AG04449 (cell line): ENCODE measurements at regions of chr14 and their contacts with region 1.

Region 1: DNA sequence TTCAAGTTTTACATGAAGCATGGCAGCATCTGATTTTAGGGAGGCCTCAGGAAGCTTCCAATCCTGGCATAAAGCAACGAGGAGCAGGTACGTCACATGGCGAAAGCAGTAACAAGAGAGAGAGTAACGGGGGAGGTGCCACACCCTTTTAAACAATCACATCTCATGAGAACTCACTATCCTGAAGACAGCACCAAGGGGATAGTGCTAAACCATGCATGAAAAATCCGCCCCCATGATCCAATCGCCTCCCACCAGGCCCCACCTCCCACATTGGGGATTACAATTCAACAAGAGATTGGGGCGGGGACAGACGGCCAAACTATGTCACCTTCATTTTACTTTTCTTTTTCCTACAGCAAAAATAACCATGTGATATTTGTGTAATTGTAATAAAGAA is 7.2 kb upstream of the MAP3K9 start:
- DNase-seq: no peak
- H3K4me3 ChIP-seq: no peak overlapping the region
- CTCF ChIP-seq: no peak

Region 2: DNA sequence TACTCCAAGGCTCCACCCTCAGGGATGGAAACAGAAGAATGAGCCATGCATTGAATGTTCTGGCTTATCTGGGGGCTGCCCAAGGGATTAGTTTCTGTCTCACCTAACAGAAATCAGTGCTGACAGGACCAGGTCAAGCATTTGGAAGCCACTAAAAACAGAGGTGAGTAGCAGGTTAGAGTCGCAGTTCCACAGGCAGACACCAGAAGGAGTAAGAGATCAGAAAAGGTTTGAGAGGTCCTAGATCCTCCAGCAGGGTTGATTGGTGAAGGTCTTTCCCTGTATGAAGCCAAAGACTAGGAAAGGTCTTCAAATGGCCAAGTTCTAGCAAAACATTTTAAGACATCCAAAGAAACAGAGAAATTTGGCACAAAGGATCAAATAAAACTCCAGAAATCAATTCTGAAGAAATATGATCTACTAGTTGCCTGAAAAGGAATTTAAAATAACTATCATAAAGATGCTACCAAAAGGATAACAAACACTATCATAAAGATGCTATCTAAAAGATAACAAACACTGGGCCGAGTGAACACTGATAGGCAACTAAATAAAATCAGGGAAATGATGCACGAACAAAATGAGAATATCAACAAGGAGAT is 194.3 kb before region 1 on chr14:
- CTCF ChIA-PET with region 1: interaction called, 13 read pairs
- POLR2A ChIA-PET with region 1: no interaction called
- DNase-seq: no peak
- H3K4me3 ChIP-seq: no peak overlapping the region
- CTCF ChIP-seq: peak; percentile 59

Region 3: DNA sequence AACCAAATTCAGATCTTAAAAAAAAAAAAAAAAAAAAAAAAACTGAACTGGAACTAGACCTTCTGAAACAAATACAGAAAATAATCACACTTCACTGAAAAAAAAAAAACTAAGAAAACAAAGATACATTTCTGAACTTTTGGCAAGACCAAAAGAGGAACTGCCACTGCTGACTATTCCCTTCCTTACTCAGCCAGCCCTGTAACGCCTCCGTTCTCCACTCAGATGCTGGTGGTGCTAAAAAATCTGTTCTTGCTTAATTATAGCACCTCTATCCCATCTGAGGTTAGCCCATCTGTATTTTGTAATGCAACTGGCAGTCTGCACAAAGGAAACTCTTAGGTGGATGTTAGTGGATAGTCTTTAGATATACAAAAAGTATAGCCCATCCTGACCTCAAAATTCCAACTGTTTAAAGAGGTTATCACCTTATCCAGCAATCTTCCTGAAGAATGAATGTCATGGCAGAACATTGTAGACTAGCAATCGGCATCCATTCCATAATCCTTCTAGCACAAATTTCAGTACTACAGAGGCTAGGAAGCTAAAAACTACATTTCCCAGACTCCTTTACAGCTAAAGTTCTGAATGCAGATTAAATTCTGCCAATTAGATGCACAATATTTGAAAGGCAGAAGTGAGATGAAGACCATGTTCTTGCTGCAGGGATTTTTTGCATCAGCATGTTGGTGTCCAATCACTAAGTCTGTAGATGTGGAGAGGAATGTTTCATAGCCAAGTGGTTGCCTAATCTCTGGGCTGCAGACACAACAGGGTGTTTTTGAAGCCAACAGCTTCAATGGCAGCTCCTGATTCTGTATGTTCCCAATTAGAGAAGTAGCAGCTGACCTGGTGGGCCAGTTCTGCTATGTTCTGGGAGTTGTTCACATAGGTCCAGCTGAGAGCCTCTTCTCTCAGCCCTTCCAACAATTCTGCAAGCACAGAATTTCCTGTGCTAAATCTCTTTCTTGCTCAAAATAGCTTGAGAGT is 12.9 kb before region 1 on chr14:
- CTCF ChIA-PET with region 1: interaction called, 25 read pairs
- POLR2A ChIA-PET with region 1: no interaction called
- DNase-seq: no peak
- H3K4me3 ChIP-seq: no peak overlapping the region
- CTCF ChIP-seq: no peak

Region 4: GRCh38 chr14:70827396-70828151 is 11.0 kb after region 1 on chr14:
- CTCF ChIA-PET with region 1: interaction called, 87 read pairs
- POLR2A ChIA-PET with region 1: no interaction called
- DNase-seq: no peak
- H3K4me3 ChIP-seq: no peak overlapping the region
- CTCF ChIP-seq: no peak

Region 5: GRCh38 chr14:70856851-70857495 is 40.4 kb after region 1 on chr14:
- CTCF ChIA-PET with region 1: interaction called, 12 read pairs
- POLR2A ChIA-PET with region 1: no interaction called
- DNase-seq: peak; percentile 92
- H3K4me3 ChIP-seq: no peak overlapping the region
- CTCF ChIP-seq: no peak

Region 6: GRCh38 chr14:70897464-70897863 is 80.9 kb after region 1 on chr14:
- CTCF ChIA-PET with region 1: interaction called, 13 read pairs
- POLR2A ChIA-PET with region 1: interaction called, 3 read pairs
- DNase-seq: peak; percentile 67
- H3K4me3 ChIP-seq: no peak overlapping the region
- CTCF ChIP-seq: no peak

Region 7: DNA sequence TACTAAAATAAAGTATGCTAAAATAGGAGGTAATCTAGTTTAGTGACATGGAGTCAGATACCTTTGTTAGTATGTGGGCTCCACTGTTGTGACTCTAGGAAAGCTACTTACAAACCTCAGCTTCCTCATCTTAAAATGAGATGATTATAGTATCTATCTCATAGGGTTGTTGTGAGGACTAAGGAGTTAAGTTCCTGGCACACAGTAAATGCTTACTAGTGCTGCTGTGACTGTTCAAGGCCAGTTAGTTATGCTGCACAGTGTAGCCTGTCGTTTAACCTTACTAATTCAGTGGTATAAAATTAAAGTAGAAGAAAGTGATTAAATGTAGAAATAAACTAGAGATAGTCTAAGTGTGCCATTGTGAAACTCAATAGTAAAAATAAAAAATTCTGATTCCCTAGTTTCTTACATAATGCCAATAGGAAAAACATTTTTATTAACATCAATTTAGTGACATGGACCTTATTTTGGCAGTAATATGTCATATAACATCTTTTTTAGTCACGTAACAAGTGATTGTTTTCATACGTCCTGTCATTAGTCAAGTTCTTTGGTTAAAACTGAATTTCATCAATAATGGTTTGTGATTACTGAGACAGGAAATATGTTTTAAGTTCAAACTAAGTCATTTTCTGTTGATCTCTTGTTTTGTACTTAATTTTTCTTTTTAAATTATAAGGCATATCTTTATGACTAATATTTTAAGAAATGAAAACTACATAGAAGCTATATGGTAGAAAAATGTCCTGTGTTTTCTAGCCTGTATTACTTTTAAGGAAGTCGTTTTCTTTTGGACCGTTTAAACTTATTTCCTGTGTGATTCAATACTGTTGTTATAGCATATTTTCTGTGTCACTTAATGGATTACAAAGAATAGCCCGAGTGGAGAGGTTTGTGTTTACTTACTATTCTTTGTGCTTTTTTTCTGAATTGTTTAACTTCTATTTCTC is 164.8 kb after region 1 on chr14:
- CTCF ChIA-PET with region 1: interaction called, 78 read pairs
- POLR2A ChIA-PET with region 1: no interaction called
- DNase-seq: no peak
- H3K4me3 ChIP-seq: no peak overlapping the region
- CTCF ChIP-seq: no peak